SK-N-SH (cell line): ENCODE measurements at regions of chr18 and their contacts with region 1.

Region 1: DNA sequence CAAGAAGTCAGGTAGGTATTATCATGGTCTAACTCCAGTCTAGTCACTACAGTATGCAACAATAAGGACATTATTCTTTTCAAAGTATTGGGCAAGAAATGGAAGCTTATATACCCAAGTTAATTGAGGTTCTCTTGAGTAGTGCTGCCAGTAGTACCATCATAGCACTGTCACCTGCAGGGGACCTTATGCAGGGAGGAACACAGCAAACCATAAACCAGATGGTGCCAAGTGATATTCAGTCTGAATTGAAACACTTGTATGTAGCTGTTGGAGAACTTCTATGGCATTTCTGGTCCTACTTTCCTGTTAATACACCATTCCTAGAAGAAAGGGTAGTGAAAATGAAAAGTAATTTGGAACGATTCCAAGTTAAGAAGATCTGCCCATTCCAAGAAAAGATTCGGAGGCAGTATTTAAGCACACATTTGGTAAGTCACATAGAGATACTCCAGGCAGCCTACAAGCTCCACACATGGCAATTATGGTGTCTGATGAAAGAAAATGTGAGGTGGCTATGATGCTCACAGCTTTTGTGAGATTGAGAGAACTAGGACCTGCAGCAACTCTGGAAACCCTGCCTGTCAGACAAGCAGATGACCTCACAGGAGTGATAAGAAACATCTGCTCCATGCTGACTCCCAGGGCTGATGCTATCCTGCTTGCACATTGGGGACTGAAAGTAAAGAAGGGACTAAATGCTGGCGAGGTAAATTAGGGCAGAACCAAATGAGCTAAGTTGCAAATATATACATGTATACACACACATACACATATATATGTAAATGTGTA is 174.7 kb downstream of the MC4R start:
- DNase-seq: peak; percentile 60
- H3K4me3 ChIP-seq: no peak overlapping the region
- H3K27ac ChIP-seq: peak overlapping the region; percentile 46 to 99; a peak in 3 of 4 replicates
- H3K4me1 ChIP-seq: peaks cover 18 to 43% of the 10 kb centered on the region in 2 experiments
- H3K27me3 ChIP-seq: no peaks in the 10 kb centered on the region
- CTCF ChIP-seq: no peak
- EP300 ChIP-seq: peak; percentile 45 to 93; a peak in 3 of 4 replicates
- RAD21 ChIP-seq: peak; percentile 37

Region 2: GRCh38 chr18:59516356-59517155 is 681.3 kb before region 1 on chr18:
- CTCF ChIA-PET with region 1: no interaction called
- POLR2A ChIA-PET with region 1: no interaction called
- DNase-seq: peak; percentile 45
- H3K4me3 ChIP-seq: no peak overlapping the region
- H3K27ac ChIP-seq: peak overlapping the region in 1 of 2 experiments; percentile 89; a peak in 3 of 4 replicates
- H3K4me1 ChIP-seq: peaks cover 5 to 32% of the 10 kb centered on the region in 2 experiments; a peak in 3 of 4 replicates
- H3K27me3 ChIP-seq: no peaks in the 10 kb centered on the region
- CTCF ChIP-seq: no peak
- EP300 ChIP-seq: peak; percentile 49 to 90; a peak in 3 of 4 replicates
- RAD21 ChIP-seq: 0 out of 2 replicates have a peak, but pooled peaks have one; percentile 10

Region 3: GRCh38 chr18:60182223-60182622 is 15.6 kb before region 1 on chr18:
- CTCF ChIA-PET with region 1: interaction called, 10 read pairs
- POLR2A ChIA-PET with region 1: interaction called, 3 read pairs
- DNase-seq: peak; percentile 38
- H3K4me3 ChIP-seq: no peak overlapping the region
- H3K27ac ChIP-seq: peak overlapping the region in 1 of 2 experiments; percentile 76; a peak in 2 of 4 replicates
- H3K4me1 ChIP-seq: peaks cover 0 to 5% of the 10 kb centered on the region in 2 experiments; a peak in 2 of 4 replicates
- H3K27me3 ChIP-seq: no peaks in the 10 kb centered on the region
- CTCF ChIP-seq: no peak
- EP300 ChIP-seq: peak in 1 of 2 experiments; percentile 86; a peak in 2 of 4 replicates
- RAD21 ChIP-seq: peak; percentile 54